Activated naive CD4-positive, alpha-beta T cell treated with anti-CD3 and anti-CD28 coated beads for 36 hours (primary cell): ENCODE measurements at regions of chr3 and their contacts with region 1.

Region 1: DNA sequence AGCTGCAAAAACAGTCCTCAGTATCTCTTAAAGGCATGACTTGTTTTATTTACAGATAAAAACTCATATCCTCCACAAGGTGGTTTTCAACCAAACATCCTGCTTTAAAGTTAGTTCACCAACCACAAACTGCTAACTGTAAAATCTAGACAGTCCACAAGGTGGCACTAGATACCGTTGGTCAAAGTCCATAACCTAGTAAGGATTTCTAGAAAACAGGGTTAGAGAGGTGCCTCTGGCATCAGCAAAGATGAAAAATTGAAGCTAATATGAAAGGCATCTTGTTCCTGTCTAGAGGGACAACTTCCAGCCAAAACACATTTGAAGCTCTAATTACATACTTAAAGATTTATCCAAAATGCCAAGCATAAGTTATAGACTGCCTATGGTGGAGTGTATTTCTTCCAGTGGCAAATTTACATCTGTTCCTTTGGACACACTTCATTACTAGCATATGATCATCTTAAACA is 56.0 kb downstream of the ZMAT3 start:
- DNase-seq: peak; percentile 81
- H3K4me3 Mint-ChIP-seq: no peak overlapping the region
- H3K27ac Mint-ChIP-seq: no peak overlapping the region
- H3K4me1 Mint-ChIP-seq: peaks cover 35% of the 10 kb centered on the region
- H3K27me3 Mint-ChIP-seq: no peaks in the 10 kb centered on the region

Region 2: DNA sequence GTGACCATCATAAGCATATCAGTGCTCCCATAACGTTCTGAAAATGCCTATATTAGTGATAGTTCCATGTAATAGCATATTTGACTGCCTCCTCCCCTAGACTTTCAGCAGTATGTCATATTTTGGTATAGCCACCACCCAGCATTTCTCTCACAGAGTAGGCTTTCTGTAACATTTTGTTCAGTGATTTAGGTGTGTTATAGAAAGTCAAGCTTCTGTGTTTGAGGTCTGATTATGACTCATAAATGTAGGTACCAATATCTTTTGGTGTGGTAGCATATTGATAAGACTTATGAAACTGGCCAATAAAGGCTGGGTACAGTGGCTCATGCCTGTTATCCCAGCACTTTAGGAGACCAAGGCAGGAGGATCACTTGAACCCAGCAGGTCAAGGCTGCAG is 90.3 kb after region 1 on chr3:
- CTCF ChIA-PET with region 1: interaction called, 4 read pairs
- intact Hi-C with region 1: loop called (anchors 1 kb)
- DNase-seq: no peak
- H3K4me3 Mint-ChIP-seq: no peak overlapping the region
- H3K27ac Mint-ChIP-seq: no peak overlapping the region
- H3K4me1 Mint-ChIP-seq: peaks cover 1% of the 10 kb centered on the region
- H3K27me3 Mint-ChIP-seq: no peaks in the 10 kb centered on the region

Region 3: DNA sequence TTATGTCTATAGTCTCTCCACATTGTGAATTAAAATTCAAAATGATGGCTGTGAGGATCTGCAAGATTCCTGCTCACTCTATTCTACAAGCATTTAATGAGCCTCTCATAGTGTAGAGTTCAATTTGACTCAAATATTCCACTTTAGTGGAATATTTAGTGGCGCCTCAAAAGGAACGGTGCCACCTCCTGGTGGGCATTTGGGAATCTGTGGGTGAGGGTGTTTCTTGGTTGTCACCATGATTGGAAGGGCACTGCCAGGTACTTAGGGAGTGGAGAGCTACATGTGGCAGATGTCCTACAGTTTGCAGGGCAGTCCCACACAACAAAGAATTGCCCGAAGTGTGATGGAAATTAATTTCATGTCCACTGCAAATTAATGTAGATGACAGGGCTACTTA is 256.8 kb after region 1 on chr3:
- CTCF ChIA-PET with region 1: interaction called, 7 read pairs
- intact Hi-C with region 1: loop called (anchors 1 kb)
- DNase-seq: peak; percentile 23
- H3K4me3 Mint-ChIP-seq: no peak overlapping the region
- H3K27ac Mint-ChIP-seq: no peak overlapping the region
- H3K4me1 Mint-ChIP-seq: no peaks in the 10 kb centered on the region
- H3K27me3 Mint-ChIP-seq: peaks cover 6% of the 10 kb centered on the region

Region 4: DNA sequence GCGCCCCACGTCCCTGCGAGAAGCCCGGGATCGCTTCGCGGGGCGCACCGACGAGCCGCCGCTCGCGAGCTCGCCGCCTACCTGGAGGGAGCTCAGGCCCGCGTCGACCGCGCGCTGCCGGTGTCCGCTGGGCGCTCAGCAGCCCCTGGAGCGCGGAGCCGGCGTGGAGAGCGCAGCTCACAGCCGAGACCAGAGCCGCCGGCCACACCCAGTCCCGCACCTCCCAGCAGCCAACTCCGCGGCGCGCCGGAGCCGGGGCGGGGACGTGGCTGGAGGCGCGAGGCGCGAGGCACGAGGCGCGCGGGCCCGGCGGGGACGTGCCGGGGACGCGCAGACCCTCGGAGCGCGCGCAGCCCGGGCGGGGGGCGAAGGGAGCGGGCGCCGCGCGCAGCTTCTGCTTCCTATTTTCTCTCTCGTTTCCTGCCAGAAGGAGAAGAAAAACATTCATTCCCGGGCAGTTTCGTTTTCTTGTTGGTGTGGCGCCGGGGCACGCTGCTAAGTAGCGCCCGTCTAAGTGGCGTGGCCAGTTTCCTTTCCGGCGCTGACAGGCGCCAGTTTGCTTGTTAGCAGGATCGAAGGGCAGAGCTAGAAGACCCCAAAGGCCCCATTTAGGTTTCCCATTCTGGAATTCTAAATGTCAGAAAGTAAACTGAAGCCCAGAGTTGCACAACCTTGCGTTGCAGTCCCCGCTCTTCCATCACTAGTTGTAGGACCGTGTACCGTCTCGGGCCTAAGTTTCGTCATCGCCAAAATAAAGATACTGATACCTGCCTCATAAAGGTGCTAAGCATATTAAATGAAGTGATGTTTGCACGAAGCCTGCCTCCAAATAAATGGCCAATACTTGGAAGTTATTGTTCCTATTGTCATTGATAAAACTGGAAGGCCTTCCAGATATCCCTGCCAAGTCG is 435.9 kb after region 1 on chr3 and contains the start of gene GNB4:
- CTCF ChIA-PET with region 1: no interaction called
- intact Hi-C with region 1: loop called (anchors 5 kb)
- DNase-seq: peak; percentile 49
- H3K4me3 Mint-ChIP-seq: peak within 1 kb of the TSS; percentile 70
- H3K27ac Mint-ChIP-seq: no peak within 1 kb of the TSS
- H3K4me1 Mint-ChIP-seq: peaks cover 13% of the 10 kb centered on the region
- H3K27me3 Mint-ChIP-seq: peaks cover 70% of the 10 kb centered on the region
- total RNA-seq, gene GNB4: 0.26 to 0.74 TPM